ENCODE measurements at regions of chr11 and their contacts with region 1.

Region 1: DNA sequence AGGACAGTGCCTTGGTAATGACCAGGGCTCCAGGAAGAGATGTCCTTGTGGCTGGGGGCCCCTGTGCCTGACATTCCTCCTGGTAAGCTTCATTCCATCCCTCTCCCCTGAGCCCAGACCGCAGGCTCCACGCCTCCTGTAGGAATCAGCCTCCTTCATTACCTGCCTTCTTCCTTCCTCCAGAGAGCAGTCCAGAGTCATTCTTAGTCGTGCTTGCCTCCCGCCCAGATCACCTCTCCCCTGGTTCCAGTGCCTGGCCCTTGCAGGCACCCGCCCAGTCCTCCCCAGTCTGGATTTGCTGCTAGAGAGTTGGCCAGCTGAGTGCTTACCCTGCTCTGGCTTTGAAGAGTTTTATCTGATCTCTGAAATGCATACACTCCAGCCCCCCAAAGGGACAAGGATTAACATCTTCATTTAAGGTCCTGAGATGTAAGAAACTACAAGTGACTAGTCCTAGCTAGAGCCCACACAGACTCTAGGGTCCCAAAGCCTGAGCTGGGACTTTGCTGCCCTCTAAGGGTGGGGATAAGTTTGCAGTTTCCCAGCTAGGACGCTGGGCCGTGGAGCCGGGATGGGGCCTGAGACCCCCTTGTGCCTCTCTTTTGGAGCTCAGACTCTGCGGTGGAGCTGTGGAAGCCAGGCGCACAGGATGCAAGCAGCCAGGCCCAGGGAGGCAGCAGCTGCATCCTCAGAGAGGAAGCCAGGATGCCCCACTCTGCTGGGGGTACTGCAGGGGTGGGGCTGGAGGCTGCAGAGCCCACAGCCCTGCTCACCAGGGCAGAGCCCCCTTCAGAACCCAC is 1.6 kb downstream of the NR1H3 start:
- DNase-seq: no peak
- H3K4me3 ChIP-seq: no peak overlapping the region
- CTCF ChIP-seq: peak; percentile 65

Region 2: GRCh38 chr11:47176328-47177228 is 82.8 kb before region 1 on chr11 and contains the start of gene ARFGAP2:
- CTCF ChIA-PET with region 1: interaction called, 108 read pairs
- POLR2A ChIA-PET with region 1: no interaction called
- DNase-seq: peak; percentile 62
- H3K4me3 ChIP-seq: peak within 1 kb of the TSS; percentile 98
- CTCF ChIP-seq: no peak

Region 3: DNA sequence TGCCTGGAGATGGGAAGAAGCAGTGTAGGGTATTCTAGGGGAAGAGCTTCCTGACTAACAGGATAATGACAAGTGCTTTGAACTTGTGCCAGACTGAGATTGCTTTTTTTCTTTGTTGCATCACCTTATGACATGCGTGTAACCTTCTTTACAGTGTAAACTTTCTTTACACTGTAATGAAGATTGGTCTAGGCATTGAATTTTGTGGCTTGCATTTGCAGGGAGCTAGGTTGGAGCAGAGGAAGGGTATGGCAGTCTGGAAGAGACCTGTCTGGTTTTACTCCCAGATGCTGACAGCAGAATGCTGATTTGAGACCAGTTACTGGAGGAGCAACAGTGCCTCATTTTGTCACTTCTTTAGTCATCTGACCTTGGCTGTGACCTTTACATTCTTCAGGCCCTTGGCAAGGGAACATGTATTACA is 39.0 kb before region 1 on chr11:
- CTCF ChIA-PET with region 1: interaction called, 11 read pairs
- POLR2A ChIA-PET with region 1: no interaction called
- DNase-seq: no peak
- H3K4me3 ChIP-seq: no peak overlapping the region
- CTCF ChIP-seq: no peak

Region 4: GRCh38 chr11:47248664-47249377 is 10.6 kb before region 1 on chr11 and contains the start of gene ACP2:
- CTCF ChIA-PET with region 1: interaction called, 44 read pairs
- POLR2A ChIA-PET with region 1: interaction called, 6 read pairs
- DNase-seq: no peak
- H3K4me3 ChIP-seq: peak within 1 kb of the TSS; percentile 72
- CTCF ChIP-seq: peak; percentile 48

Measured in AG04449 (cell line).